Ascending aorta (tissue), 2 donors: ENCODE measurements at regions of chr11 and their contacts with region 1.

Region 1: GRCh38 chr11:575996-576768 is at the start of gene PHRF1:
- DNase-seq: peak; percentile 72 to 96
- H3K4me3 ChIP-seq: peak within 1 kb of the TSS; percentile 81 to 91
- H3K27ac ChIP-seq: peak within 1 kb of the TSS; percentile 90 to 91
- H3K4me1 ChIP-seq: peaks cover 11 to 38% of the 10 kb centered on the region in 2 donors
- H3K27me3 ChIP-seq: no peaks in the 10 kb centered on the region
- CTCF ChIP-seq: no peak
- total RNA-seq, gene PHRF1: 25.4 TPM

Region 2: DNA sequence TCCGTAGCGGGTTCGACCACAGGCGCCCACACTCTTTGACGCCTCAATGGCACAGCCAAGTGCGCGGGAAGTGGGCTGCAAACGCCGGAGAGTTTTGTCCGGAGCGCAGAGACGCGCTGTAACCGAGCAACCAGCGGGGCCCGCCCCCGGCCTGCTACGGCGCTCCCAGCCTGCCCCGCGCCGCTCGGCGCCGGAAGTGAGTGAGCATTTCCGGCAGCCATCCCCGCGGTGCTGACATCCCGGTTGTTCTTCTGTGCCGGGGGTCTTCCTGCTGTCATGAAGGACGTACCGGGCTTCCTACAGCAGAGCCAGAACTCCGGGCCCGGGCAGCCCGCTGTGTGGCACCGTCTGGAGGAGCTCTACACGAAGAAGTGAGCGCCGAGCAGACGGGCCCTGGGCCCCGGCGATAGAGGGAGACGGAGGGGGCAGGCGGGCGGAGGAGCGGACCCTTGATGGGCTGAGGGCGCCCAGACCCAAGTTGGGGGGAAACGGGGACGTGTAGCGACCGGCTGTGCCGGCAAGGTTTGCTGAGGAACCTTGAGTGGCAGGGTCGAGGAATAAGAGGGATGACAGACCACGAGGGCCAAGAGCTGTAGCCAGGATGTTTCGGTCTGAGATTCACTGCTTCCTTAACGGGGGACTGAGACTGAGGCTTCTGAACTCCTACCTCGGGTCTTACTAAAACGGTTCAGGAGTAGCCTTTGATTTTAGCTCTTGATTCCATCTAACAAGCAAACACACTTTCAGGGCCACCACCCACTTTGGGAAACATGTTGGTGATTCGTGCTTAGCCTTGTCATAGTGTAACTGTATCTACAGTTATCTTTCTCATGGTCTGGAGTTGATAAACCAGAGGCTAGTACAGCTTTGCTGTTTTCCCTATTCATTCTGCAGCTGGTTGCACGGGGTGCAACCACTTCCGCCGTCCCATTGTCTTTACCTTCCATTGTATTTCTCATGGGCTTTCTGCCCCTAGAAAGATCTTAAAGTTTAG is 339.1 kb before region 1 on chr11 and contains the start of gene PSMD13:
- intact Hi-C with region 1: loop called (anchors 5 kb)
- DNase-seq: peak; percentile 32 to 92
- H3K4me3 ChIP-seq: peak within 1 kb of the TSS; percentile 96 to 99
- H3K27ac ChIP-seq: peak within 1 kb of the TSS; percentile 98
- H3K4me1 ChIP-seq: peaks cover 8 to 15% of the 10 kb centered on the region in 2 donors
- H3K27me3 ChIP-seq: no peaks in the 10 kb centered on the region
- CTCF ChIP-seq: no peak
- total RNA-seq, gene PSMD13: 50.2 TPM

Region 3: DNA sequence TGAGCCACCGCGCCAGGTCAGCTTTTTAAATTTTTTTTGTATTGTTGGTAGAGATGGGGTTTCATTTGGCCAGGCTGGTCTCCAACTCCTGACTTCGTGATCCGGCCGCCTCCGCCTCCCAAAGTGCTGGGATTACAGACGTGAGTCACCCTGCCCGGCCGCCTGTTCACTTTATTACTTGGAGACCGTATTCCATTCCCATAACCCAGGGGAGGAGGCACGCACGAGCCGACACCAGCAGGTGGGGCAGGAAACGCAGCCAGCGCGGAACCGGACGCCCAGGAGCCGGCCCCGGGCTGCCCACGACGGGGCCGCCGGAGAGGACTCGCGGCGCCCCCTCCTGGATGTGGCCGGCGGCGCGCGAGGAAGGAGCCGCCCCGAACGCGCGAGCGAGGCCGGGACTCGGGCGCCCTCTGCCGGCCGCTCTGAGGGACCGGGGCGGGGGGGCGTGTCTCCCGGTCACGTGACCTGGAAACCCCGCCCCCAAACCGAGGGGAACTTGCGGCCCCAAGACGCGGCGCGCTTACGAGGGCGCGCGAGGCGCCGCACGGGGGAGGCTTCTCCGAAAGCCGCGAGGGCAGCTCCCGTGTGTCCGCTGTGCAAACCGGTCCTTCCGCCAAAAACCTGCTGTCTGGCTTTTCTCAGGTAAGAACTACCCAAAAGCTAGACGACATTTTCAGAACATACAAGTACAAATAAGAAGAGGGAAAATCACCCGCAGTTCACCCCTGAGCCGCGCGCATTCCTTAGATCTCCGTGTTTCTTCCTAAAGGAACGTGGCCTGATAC is 57.5 kb before region 1 on chr11:
- intact Hi-C with region 1: no loop called
- DNase-seq: peak; percentile 81 to 96
- H3K4me3 ChIP-seq: peak overlapping the region; percentile 11 to 54
- H3K27ac ChIP-seq: peak overlapping the region; percentile 76 to 80
- H3K4me1 ChIP-seq: peaks cover 2 to 3% of the 10 kb centered on the region in 2 donors
- H3K27me3 ChIP-seq: no peaks in the 10 kb centered on the region
- CTCF ChIP-seq: peak; percentile 84 to 100 (median 96)

Region 4: GRCh38 chr11:535519-536454 is 40.4 kb before region 1 on chr11 and contains the start of gene HRAS:
- intact Hi-C with region 1: loop called (anchors 1 kb)
- DNase-seq: peak; percentile 72 to 96
- H3K4me3 ChIP-seq: peak within 1 kb of the TSS; percentile 92 to 94
- H3K27ac ChIP-seq: peak within 1 kb of the TSS; percentile 63 to 64
- H3K4me1 ChIP-seq: peaks cover 13 to 26% of the 10 kb centered on the region in 2 donors
- H3K27me3 ChIP-seq: no peaks in the 10 kb centered on the region
- CTCF ChIP-seq: no peak
- total RNA-seq, gene HRAS: 21.6 TPM

Region 5: DNA sequence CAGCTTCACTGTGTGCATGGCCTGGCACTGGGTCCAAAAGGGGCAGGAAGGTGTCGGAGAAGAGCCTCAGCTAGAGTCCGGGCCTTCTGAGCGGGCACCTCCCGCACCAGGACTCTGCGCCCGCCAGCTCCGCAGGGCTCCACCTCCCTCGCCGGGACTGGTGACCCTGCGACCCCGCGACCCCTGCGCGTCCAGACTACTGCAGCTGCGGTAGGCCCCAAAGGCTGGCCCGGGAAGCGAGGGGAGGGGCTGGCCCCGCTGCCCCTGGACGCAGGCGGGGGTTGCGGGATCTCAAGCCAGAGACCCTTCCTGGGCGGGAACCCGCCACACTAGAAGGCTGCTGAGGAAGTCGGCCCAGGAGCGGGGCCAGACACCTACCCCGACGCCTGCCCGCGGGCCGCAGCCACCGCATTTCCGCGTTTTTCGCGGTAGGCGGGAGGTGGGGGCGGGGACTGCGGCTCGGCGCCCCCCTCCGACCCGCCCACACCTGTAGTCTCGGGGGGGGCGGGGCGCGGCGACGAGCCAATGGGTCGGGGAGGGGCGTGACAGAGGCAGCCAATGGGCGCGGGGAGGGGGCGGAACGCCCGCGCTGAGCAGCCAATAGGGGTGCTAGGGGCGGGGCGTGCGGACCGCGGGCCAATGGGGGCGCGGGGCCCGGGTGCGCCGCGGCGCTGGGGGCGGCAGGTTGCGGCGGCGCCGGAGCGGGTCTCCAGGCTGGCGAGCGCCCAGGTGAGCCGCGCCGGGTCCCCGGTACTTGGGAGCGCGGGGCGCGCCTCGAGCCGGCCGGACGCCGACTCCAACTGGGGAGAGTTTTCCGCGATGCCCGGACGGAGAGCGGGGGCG is 15.7 kb before region 1 on chr11 and contains the starts of genes LMNTD2 and RASSF7:
- intact Hi-C with region 1: loop called (anchors 1 kb)
- DNase-seq: peak; percentile 68 to 94
- H3K4me3 ChIP-seq: peak within 1 kb of the TSS; percentile 63 to 86
- H3K27ac ChIP-seq: no peak within 1 kb of the TSS
- H3K4me1 ChIP-seq: peaks cover 11 to 12% of the 10 kb centered on the region in 2 donors
- H3K27me3 ChIP-seq: peaks cover 10% of the 10 kb centered on the region
- CTCF ChIP-seq: no peak
- total RNA-seq, gene LMNTD2: 1.1 TPM
- total RNA-seq, gene RASSF7: 3.5 TPM

Region 6: DNA sequence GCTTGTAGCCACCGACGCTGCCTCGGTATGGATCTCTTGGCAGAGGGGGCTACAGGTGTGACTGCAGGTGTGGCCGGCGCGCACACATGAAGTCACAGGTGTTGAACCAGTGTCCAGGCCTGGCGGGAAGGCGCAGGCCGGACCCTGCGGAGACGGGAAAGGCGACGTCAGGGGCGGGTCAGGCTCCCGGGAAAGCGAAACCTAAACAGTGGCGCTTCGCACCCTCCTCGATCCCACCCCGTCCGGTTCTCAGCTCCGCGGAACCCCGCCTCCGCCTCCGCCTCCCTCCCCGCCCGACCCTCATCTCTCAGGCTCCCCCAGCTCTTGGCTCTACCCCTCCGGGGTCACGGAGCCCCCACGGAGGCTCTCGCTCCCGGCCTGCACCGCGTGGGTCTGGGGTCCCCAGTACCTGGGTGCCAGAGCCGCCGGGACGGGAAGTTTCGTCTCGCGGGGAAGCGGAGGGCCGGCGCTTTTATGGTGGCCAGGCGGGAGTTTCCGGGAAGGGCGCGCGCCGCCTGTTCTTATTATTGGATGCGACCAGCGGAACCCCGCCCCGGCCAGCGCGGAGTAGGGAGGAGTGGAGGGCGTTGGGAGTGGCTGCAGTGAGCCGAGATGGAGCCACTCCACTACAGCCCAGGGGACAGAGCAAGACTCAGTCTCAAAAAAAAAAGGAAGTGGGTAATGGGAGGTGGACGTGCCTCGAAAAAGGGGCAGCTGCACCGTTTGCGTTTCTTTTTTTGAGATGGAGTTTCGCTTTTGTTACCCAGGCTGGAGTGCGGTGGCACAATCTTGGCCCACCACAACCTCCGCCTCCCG is 39.5 kb after region 1 on chr11 and contains the start of gene IRF7:
- intact Hi-C with region 1: loop called (anchors 2 kb)
- DNase-seq: peak; percentile 85 to 98
- H3K4me3 ChIP-seq: peak within 1 kb of the TSS; percentile 69 to 81
- H3K27ac ChIP-seq: peak within 1 kb of the TSS; percentile 90 to 94
- H3K4me1 ChIP-seq: peaks cover 11 to 14% of the 10 kb centered on the region in 2 donors
- H3K27me3 ChIP-seq: no peaks in the 10 kb centered on the region
- CTCF ChIP-seq: no peak
- total RNA-seq, gene IRF7: 44.6 TPM

Region 7: DNA sequence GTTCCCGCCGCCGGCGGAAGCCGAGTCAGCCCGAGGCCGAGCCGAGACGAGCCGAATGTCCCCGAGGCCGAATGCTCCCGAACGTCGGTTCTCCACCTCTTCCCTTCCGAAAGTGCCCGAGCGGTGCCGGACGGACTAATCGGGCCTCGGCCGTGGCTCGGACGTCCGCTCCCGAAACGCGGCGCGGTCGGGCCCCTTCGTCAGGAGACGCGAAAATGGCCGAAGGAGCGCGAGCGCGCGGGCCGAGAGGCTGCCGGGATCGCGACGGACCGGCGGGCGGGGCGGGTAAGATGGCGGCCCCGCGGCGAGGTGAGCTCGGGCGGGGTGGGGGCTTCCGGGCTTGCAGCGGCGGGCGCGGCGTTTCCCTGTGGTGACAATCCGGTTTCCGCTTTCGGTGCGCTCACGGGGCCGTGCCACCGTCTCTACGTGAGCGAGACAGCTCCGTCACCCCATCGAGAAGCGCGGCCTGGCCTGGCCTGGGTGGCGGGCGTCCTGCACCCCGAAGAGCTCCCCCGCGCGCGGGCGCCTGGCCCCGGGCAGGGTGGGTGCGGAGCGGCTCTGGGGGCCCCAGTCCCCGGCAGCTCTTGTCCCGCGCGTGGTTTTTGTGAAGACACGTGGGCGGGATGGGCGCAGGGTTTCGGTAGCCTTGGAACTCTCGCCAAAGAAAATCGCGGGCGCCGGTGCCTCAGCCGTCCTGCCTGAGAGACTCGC is 119.5 kb after region 1 on chr11 and contains the start of gene TMEM80:
- intact Hi-C with region 1: loop called (anchors 1 kb)
- DNase-seq: peak; percentile 93 to 99
- H3K4me3 ChIP-seq: peak within 1 kb of the TSS; percentile 93 to 97
- H3K27ac ChIP-seq: peak within 1 kb of the TSS; percentile 100
- H3K4me1 ChIP-seq: peaks cover 14 to 38% of the 10 kb centered on the region in 2 donors
- H3K27me3 ChIP-seq: no peaks in the 10 kb centered on the region
- CTCF ChIP-seq: no peak
- total RNA-seq, gene TMEM80: 1.3 TPM